ENCODE measurements at regions of chr6 and their contacts with region 1.

Region 1: DNA sequence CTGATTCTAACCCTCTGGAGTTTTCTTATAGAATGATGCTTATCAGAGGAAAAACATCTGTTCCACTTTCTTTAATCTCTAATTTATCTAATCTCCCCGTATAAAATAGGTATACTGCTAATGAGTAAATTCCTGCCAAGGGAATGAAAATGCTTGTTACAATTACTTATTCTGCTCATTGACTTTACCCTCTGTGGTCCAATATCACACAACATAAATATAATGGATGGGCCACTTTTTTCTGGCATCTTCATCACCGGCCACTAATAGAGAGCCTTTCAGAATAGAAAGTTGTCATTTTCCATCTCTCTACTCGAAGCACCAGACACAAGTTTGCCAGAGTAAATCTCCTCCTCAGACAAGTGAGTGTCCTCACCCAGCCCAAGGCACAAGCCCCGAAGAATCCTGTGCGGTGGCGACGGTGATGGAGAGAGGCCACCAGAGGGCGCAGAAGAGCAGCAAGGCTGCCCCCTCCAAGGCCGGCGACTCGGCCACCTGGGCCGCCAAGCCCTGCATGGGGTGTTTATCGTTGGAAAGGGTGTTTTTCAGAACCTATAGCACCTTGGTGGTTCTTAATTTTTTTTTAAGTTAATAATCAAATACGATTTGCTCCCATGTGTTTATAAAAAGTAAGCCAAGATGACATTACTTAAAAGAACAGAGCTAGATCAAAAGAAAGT is 212.9 kb upstream of the ARID1B start:
- DNase-seq: peak; percentile 87
- H3K4me3 Mint-ChIP-seq: no peak overlapping the region
- H3K27ac Mint-ChIP-seq: peak overlapping the region; percentile 13
- H3K4me1 Mint-ChIP-seq: no peaks in the 10 kb centered on the region
- H3K27me3 Mint-ChIP-seq: peaks cover 19% of the 10 kb centered on the region

Region 2: GRCh38 chr6:155333414-155333813 is 1230.9 kb before region 1 on chr6:
- CTCF ChIA-PET with region 1: interaction called, 3 read pairs
- POLR2A ChIA-PET with region 1: no interaction called
- intact Hi-C with region 1: loop called (anchors 10 kb)
- DNase-seq: peak; percentile 39
- H3K4me3 Mint-ChIP-seq: peak overlapping the region; percentile 33
- H3K27ac Mint-ChIP-seq: peak overlapping the region; percentile 76
- H3K4me1 Mint-ChIP-seq: peaks cover 28% of the 10 kb centered on the region
- H3K27me3 Mint-ChIP-seq: no peaks in the 10 kb centered on the region

Region 3: GRCh38 chr6:156231026-156231765 is 333.1 kb before region 1 on chr6:
- CTCF ChIA-PET with region 1: no interaction called
- POLR2A ChIA-PET with region 1: no interaction called
- intact Hi-C with region 1: no loop called
- DNase-seq: no peak
- H3K4me3 Mint-ChIP-seq: no peak overlapping the region
- H3K27ac Mint-ChIP-seq: no peak overlapping the region
- H3K4me1 Mint-ChIP-seq: no peaks in the 10 kb centered on the region
- H3K27me3 Mint-ChIP-seq: no peaks in the 10 kb centered on the region

Region 4: DNA sequence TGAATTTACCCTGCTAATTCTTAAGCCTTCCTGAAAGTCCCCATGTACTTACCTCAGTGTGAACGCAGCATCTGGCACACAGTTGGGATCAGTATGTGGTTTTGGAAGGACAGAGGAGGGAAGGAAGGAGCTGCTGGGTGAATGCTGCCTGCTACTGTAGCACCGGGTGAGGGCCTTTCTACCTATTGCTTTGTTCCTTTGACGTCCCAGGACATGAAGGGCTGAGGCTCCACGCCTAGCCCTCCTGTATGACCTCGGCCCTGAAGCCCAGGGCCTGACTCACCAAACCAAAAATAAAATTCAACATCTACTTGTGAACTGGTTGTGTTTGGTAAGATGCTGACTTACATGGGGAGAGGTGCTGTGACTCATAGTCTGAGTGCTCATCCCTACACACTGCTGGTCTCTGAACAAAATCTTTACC is 264.0 kb after region 1 on chr6:
- CTCF ChIA-PET with region 1: no interaction called
- POLR2A ChIA-PET with region 1: no interaction called
- intact Hi-C with region 1: loop called (anchors 5 kb)
- DNase-seq: peak; percentile 47
- H3K4me3 Mint-ChIP-seq: no peak overlapping the region
- H3K27ac Mint-ChIP-seq: peak overlapping the region; percentile 65
- H3K4me1 Mint-ChIP-seq: peaks cover 80% of the 10 kb centered on the region
- H3K27me3 Mint-ChIP-seq: no peaks in the 10 kb centered on the region

Region 5: GRCh38 chr6:157184202-157185020 is 620.1 kb after region 1 on chr6:
- CTCF ChIA-PET with region 1: interaction called, 3 read pairs
- POLR2A ChIA-PET with region 1: no interaction called
- intact Hi-C with region 1: loop called (anchors 10 kb)
- DNase-seq: peak; percentile 75
- H3K4me3 Mint-ChIP-seq: peak overlapping the region; percentile 43
- H3K27ac Mint-ChIP-seq: peak overlapping the region; percentile 62
- H3K4me1 Mint-ChIP-seq: peaks cover 13% of the 10 kb centered on the region
- H3K27me3 Mint-ChIP-seq: no peaks in the 10 kb centered on the region